ENCODE measurements at regions of chr1 and their contacts with region 1.

Region 1: GRCh38 chr1:111720977-111721786 is 18.0 kb downstream of the INKA2 start:
- DNase-seq: no peak

Region 2: GRCh38 chr1:111739194-111739924 is 18.2 kb after region 1 on chr1 and contains the start of gene INKA2:
- intact Hi-C with region 1: loop called (anchors 2 kb)
- DNase-seq: peak; percentile 98
- total RNA-seq, gene INKA2: 13.7 TPM